ENCODE measurements at regions of chr14 and their contacts with region 1.

Region 1: GRCh38 chr14:80784820-80785219 is 156.7 kb downstream of the CEP128 start:
- DNase-seq: peak; percentile 4
- H3K4me3 ChIP-seq: no peak overlapping the region
- H3K27me3 ChIP-seq: no peaks in the 10 kb centered on the region
- CTCF ChIP-seq: peak; percentile 46

Region 2: GRCh38 chr14:80213599-80213998 is 571.2 kb before region 1 on chr14:
- CTCF ChIA-PET with region 1: interaction called, 23 read pairs
- POLR2A ChIA-PET with region 1: no interaction called
- DNase-seq: no peak
- H3K4me3 ChIP-seq: no peak overlapping the region
- H3K27me3 ChIP-seq: no peaks in the 10 kb centered on the region
- CTCF ChIP-seq: peak; percentile 76